ENCODE measurements at regions of chr20 and their contacts with region 1.

Region 1: GRCh38 chr20:50980851-50981713 is 22.5 kb downstream of the MOCS3 start:
- DNase-seq: peak; percentile 83
- H3K4me3 ChIP-seq: no peak overlapping the region; a peak in 1 of 4 replicates
- H3K27ac ChIP-seq: peak overlapping the region in 1 of 2 experiments; percentile 91; a peak in 2 of 4 replicates
- H3K4me1 ChIP-seq: peaks cover 4 to 12% of the 10 kb centered on the region in 2 experiments; a peak in 1 of 4 replicates
- H3K27me3 ChIP-seq: no peaks in the 10 kb centered on the region
- CTCF ChIP-seq: peak; percentile 93
- EP300 ChIP-seq: no peak
- RAD21 ChIP-seq: peak; percentile 77

Region 2: GRCh38 chr20:50967586-50967985 is 13.5 kb before region 1 on chr20:
- CTCF ChIA-PET with region 1: interaction called, 28 read pairs
- POLR2A ChIA-PET with region 1: no interaction called
- DNase-seq: no peak
- H3K4me3 ChIP-seq: no peak overlapping the region
- H3K27ac ChIP-seq: no peak overlapping the region
- H3K4me1 ChIP-seq: no peaks in the 10 kb centered on the region
- H3K27me3 ChIP-seq: no peaks in the 10 kb centered on the region
- CTCF ChIP-seq: no peak
- EP300 ChIP-seq: no peak
- RAD21 ChIP-seq: no peak

Region 3: GRCh38 chr20:51318058-51318895 is 337.2 kb after region 1 on chr20:
- CTCF ChIA-PET with region 1: interaction called, 169 read pairs
- POLR2A ChIA-PET with region 1: no interaction called
- DNase-seq: peak; percentile 78
- H3K4me3 ChIP-seq: no peak overlapping the region; a peak in 1 of 4 replicates
- H3K27ac ChIP-seq: no peak overlapping the region
- H3K4me1 ChIP-seq: no peaks in the 10 kb centered on the region; a peak in 1 of 4 replicates
- H3K27me3 ChIP-seq: no peaks in the 10 kb centered on the region
- CTCF ChIP-seq: peak; percentile 60
- EP300 ChIP-seq: no peak
- RAD21 ChIP-seq: peak; percentile 53

Region 4: GRCh38 chr20:51333971-51334370 is 352.9 kb after region 1 on chr20:
- CTCF ChIA-PET with region 1: interaction called, 163 read pairs
- POLR2A ChIA-PET with region 1: no interaction called
- DNase-seq: no peak
- H3K4me3 ChIP-seq: no peak overlapping the region
- H3K27ac ChIP-seq: peak overlapping the region in 1 of 2 experiments; percentile 100; a peak in 2 of 4 replicates
- H3K4me1 ChIP-seq: peaks cover 0 to 10% of the 10 kb centered on the region in 2 experiments; a peak in 3 of 4 replicates
- H3K27me3 ChIP-seq: no peaks in the 10 kb centered on the region
- CTCF ChIP-seq: no peak
- EP300 ChIP-seq: no peak
- RAD21 ChIP-seq: no peak

Region 5: DNA sequence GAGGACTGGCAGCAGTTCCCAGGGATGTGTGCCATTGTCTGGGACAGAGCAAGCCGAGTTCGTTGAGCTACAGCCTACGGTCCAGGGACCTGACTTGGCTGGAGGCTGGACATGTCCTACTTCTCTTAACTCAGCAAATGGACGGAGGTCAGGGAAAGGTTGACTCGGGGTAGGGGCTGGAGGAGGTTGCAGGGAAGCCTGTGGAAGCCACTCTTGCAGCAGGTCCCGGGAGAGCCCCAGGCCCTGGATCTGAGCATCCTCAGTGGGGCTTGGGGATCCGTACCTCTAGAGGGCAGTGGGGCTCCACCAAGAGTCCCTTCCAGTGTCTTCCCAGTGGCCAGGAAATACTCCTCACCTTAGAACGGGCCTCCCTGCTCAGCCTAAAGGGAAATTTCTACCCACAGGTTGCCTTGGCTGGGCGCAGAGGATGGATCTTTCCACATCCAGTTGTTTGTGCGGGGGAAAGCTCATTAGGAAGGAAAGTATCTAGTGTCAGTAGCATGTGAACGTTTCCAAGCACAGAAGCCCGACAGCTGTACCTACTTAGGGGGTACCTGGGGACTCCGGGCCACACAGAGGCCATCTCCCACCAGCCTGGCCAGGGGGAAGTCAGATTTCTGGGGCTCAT is 391.2 kb after region 1 on chr20:
- CTCF ChIA-PET with region 1: interaction called, 23 read pairs
- POLR2A ChIA-PET with region 1: no interaction called
- DNase-seq: peak; percentile 86
- H3K4me3 ChIP-seq: no peak overlapping the region
- H3K27ac ChIP-seq: peak overlapping the region in 1 of 2 experiments; percentile 32; a peak in 1 of 4 replicates
- H3K4me1 ChIP-seq: peaks cover 6 to 24% of the 10 kb centered on the region in 2 experiments; a peak in 2 of 4 replicates
- H3K27me3 ChIP-seq: no peaks in the 10 kb centered on the region
- CTCF ChIP-seq: peak; percentile 77
- EP300 ChIP-seq: no peak
- RAD21 ChIP-seq: peak; percentile 93

Measured in SK-N-SH (cell line).